ENCODE measurements at regions of chr2 and their contacts with region 1.

Region 1: GRCh38 chr2:111883661-111884591 is at the start of gene ANAPC1:
- DNase-seq: peak; percentile 67
- ATAC-seq: peak; percentile 95
- H3K4me3 ChIP-seq: peak within 1 kb of the TSS; percentile 97
- H3K27ac ChIP-seq: peak within 1 kb of the TSS; percentile 90
- H3K4me1 ChIP-seq: no peaks in the 10 kb centered on the region; the same call in 1 of the 2 replicates
- H3K27me3 ChIP-seq: no peaks in the 10 kb centered on the region
- CTCF ChIP-seq: no peak
- EP300 ChIP-seq: no peak
- POLR2A ChIP-seq: peak; percentile 98
- RAD21 ChIP-seq: no peak
- polyA plus RNA-seq, gene ANAPC1: 10.0 to 11.8 TPM

Region 2: DNA sequence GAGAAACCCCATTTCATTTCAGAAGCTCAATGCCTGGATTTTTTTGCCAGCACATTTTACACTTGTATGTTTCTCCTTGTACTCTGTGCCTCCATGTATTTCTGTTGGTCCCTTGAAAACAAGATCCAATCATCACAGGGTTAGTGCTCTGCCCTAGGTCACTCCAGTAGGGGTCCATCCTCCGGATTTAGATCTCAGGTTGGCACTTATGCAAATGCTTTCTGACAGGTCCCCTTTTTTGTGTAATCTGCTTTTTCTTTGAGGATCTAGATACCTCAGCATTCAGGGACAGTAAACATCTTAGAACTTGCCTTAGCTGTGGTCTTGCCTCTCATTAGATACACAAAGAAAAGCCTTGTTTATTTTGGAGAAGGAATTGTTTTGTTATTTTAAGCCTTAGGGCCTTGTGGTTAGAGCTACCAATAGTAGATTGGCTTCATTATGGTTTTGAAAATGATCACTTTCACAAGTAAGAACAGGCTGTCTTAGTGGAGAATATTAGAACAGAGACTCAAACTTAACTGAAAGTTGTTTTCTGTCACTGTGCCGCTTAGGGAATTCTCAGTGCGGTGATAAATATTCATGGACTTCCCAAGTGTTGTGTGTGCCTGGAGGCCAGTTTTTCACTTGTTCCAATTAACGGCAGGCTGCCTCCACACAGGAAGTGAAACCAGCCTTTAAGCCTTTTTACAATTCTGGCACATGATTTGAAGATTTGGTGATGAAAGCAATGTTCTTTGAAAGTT is 22.2 kb after region 1 on chr2:
- CTCF ChIA-PET with region 1: interaction called, 93 read pairs
- POLR2A ChIA-PET with region 1: interaction called, 13 read pairs
- RAD21 ChIA-PET with region 1: interaction called, 5 read pairs
- SMC1A ChIA-PET with region 1: interaction called, 11 read pairs
- in situ Hi-C with region 1: no loop called
- intact Hi-C with region 1: no loop called
- DNase-seq: peak; percentile 47
- ATAC-seq: peak; percentile 82
- H3K4me3 ChIP-seq: peak overlapping the region; percentile 15; the same call in 1 of the 2 replicates
- H3K27ac ChIP-seq: no peak overlapping the region
- H3K4me1 ChIP-seq: peaks cover 10% of the 10 kb centered on the region
- H3K27me3 ChIP-seq: no peaks in the 10 kb centered on the region
- CTCF ChIP-seq: no peak
- EP300 ChIP-seq: peak; percentile 10 to 60; a peak in 2 of 4 replicates
- POLR2A ChIP-seq: no peak
- RAD21 ChIP-seq: no peak

Region 3: GRCh38 chr2:112048887-112049286 is 165.0 kb after region 1 on chr2:
- CTCF ChIA-PET with region 1: interaction called, 189 read pairs
- POLR2A ChIA-PET with region 1: interaction called, 5 read pairs
- RAD21 ChIA-PET with region 1: interaction called, 21 read pairs
- SMC1A ChIA-PET with region 1: interaction called, 85 read pairs
- in situ Hi-C with region 1: loop called (anchors 5 kb)
- intact Hi-C with region 1: loop called (anchors 1 kb)
- DNase-seq: no peak
- ATAC-seq: peak; percentile 91
- H3K4me3 ChIP-seq: no peak overlapping the region
- H3K27ac ChIP-seq: no peak overlapping the region
- H3K4me1 ChIP-seq: no peaks in the 10 kb centered on the region
- H3K27me3 ChIP-seq: no peaks in the 10 kb centered on the region
- CTCF ChIP-seq: peak; percentile 72 to 85 (median 73)
- EP300 ChIP-seq: no peak
- POLR2A ChIP-seq: no peak
- RAD21 ChIP-seq: peak; percentile 85

Region 4: DNA sequence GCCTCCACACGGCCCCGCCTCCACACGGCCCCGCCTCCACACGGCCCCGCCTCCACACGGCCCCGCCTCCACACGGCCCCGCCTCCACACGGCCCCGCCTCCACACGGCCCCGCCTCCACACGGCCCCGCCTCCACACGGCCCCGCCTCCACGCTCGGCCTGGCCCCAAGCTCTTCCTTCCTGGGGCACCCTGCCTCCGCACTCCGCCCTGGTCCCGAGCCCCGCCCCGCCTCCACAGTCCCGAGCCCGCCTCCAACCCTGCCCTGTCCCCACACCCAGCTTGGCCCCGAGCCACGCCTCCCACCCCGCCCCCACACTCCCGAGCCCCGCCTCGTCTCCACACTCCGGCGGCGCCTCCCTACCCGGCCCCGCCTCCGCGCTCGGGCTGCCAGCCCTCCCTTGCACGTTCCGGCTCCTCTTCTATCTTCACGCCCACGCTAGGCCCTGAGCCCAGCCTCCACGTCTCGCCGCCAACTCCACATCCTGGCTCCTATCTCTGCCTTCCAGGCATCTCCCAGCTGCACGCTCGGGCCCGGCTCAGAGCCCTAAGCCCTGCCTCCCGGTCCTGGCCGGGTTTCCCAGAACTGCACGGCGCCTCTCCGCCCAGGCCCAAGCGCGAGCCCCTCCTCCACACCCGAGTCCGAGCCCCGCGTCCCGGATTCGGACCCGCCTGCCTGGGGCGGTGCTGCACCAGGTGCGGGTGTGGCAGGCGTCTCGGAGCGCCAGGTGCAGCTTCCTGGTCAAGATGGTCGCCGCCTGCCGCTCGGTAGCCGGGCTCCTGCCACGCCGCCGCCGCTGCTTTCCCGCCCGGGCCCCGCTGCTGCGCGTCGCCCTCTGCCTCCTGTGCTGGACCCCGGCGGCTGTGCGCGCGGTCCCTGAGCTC is 171.2 kb after region 1 on chr2 and contains the start of gene TMEM87B:
- CTCF ChIA-PET with region 1: interaction called, 189 read pairs
- POLR2A ChIA-PET with region 1: interaction called, 5 read pairs
- RAD21 ChIA-PET with region 1: interaction called, 19 read pairs
- SMC1A ChIA-PET with region 1: interaction called, 85 read pairs
- in situ Hi-C with region 1: loop called (anchors 5 kb)
- intact Hi-C with region 1: no loop called
- DNase-seq: peak; percentile 86
- ATAC-seq: peak; percentile 79
- H3K4me3 ChIP-seq: peak within 1 kb of the TSS; percentile 90
- H3K27ac ChIP-seq: peak within 1 kb of the TSS; percentile 64
- H3K4me1 ChIP-seq: peaks cover 5% of the 10 kb centered on the region
- H3K27me3 ChIP-seq: no peaks in the 10 kb centered on the region
- CTCF ChIP-seq: no peak
- EP300 ChIP-seq: 0 out of 4 replicates have a peak, but pooled peaks of 1 of the 2 experiments have one; percentile 32
- POLR2A ChIP-seq: peak; percentile 86
- RAD21 ChIP-seq: no peak
- polyA plus RNA-seq, gene TMEM87B: 5.7 to 8.2 TPM

Region 5: DNA sequence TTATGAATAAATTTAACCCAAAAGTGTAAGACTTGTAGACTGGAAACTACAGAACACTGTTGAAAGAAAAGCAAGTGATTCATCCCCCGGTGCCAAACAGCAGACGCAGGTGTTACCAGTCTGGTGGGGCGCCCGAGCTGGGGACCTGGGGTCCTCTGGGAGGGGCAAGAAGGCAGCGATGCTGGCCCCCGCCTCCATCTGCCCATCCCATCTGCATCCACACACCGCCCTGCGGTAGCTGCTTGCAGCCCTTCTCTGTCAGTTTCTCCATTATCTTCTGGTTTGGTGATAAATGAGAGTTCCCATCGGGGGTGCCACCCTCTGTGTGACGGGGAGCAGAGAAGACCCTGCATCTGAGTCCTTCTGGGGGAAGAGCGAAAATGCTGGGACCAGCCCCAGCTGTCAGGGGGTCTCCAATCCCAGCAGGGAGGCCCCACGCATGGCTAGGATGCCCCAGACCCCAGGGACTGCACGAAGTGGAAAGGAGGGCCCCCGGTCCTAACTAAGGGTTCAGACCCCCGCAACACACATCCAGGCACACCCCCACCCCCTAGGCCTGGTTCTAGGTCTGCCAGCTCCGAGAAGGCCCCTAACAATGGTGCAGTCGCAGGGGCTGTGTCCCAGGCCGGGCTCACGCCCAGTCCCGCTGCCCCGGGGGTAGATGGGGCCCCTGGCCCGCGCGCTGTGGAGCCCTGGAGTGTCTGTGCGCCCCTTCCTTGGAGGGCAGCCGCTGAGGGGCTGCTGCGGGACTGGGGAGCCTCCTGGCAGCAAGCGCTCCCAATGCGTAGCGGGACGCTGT is 550.2 kb after region 1 on chr2:
- CTCF ChIA-PET with region 1: interaction called, 4 read pairs
- POLR2A ChIA-PET with region 1: no interaction called
- RAD21 ChIA-PET with region 1: no interaction called
- SMC1A ChIA-PET with region 1: no interaction called
- in situ Hi-C with region 1: no loop called
- intact Hi-C with region 1: loop called (anchors 10 kb)
- DNase-seq: no peak
- ATAC-seq: no peak
- H3K4me3 ChIP-seq: no peak overlapping the region
- H3K27ac ChIP-seq: no peak overlapping the region
- H3K4me1 ChIP-seq: no peaks in the 10 kb centered on the region
- H3K27me3 ChIP-seq: no peaks in the 10 kb centered on the region
- CTCF ChIP-seq: no peak
- EP300 ChIP-seq: no peak
- POLR2A ChIP-seq: no peak
- RAD21 ChIP-seq: no peak

Measured in GM12878 (cell line).